Heart right ventricle (tissue), 16 donors: ENCODE measurements at regions of chr9 and their contacts with region 1.

Region 1: DNA sequence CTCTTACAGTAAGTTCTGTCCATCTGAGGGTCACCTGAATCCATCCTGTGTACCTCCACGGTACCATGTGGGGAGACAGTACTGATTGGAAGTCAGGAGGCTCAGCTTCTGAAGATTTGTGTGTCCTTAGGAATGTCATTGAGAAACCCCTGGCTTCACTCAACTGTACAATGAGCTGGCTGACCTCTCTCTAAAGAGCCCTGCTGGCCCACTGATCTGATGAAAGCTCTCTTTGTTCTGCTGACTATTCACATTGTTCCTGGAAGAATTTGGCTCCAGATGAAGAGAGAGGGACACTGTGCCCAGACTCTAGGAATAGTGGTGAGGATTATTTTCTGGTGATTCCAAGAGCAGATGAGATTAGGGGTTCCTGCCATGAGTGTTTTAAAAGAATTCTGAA is 141.2 kb downstream of the LURAP1L start:
- DNase-seq: no peak
- ATAC-seq: peak in 4 of 8 donors; percentile 26 to 64 (median 54)
- H3K4me3 ChIP-seq: no peak overlapping the region
- H3K27ac ChIP-seq: no peak overlapping the region
- H3K4me1 ChIP-seq: no peaks in the 10 kb centered on the region
- H3K27me3 ChIP-seq: no peaks in the 10 kb centered on the region
- CTCF ChIP-seq: no peak

Region 2: GRCh38 chr9:12719431-12719830 is 196.6 kb before region 1 on chr9:
- intact Hi-C with region 1: no loop called
- DNase-seq: no peak
- ATAC-seq: peak in 3 of 8 donors; percentile 59 to 69 (median 65)
- H3K4me3 ChIP-seq: no peak overlapping the region
- H3K27ac ChIP-seq: no peak overlapping the region
- H3K4me1 ChIP-seq: no peaks in the 10 kb centered on the region
- H3K27me3 ChIP-seq: no peaks in the 10 kb centered on the region
- CTCF ChIP-seq: peak in 8 of 9 donors; percentile 31 to 68 (median 55)

Region 3: DNA sequence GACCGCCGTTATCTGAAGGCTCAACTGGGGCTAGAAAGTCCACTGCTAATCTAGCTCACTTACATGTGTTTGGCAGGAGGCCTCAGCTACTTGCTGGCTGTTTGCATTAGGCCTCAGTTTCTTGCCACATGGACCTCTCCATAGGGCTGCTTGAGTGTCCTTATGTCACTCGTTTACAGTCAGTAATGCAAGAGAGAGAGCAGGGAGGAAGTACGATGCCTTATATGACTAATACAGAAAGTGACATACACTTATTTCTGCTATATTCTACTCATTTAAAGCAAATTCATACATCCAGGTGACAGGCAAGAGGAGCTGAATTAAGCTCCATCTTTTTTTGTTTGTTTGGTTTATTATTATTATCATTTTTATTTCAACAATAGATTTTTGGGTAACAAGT is 38.4 kb after region 1 on chr9:
- intact Hi-C with region 1: no loop called
- DNase-seq: no peak
- ATAC-seq: no peak
- H3K4me3 ChIP-seq: no peak overlapping the region
- H3K27ac ChIP-seq: no peak overlapping the region
- H3K4me1 ChIP-seq: no peaks in the 10 kb centered on the region
- H3K27me3 ChIP-seq: no peaks in the 10 kb centered on the region
- CTCF ChIP-seq: no peak

Region 4: DNA sequence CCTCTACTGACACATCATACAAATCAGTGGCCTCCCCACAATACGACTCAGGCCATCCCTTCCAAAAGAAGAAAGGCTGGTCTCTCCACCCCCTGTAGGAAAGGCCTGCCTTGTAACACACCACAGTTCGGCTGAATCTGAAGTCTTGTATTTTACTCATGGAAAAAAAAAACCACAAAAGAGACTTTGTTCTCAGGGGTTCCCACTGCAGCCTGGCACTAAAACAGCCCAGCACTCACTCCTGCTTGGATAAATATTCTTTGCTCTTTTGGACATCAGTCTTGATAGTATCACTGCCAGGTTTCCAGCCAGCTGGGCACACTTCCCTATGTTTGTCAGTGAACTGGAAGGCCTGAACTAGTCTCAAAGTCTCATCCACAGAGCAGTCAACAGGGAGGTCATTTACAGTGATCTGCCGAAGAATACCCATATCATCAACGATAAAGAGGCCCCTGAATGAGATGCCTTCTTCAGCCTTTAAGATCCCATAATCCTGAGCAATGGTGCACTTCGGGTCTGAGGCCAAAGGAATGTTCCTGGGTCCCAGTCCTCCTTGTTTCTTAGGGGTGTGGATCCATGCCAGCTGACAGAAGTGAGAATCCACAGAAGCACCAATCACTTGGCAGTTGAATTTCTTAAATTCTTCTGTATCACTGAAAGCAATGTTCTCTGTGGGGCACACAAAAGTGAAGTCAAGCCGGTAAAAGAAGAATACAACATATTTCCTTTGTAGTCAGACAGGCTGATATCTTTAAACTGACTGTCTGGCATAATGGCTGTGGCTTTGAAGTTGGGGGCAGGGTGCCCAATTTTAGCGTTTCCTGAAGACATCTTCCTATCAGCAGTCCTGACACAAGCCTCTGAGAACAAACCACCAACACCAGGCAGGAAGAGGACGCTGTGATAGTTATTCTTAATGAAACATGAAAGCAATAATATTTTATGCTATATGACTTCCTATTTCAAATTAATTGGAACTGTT is 56.9 kb after region 1 on chr9:
- intact Hi-C with region 1: loop called in 1 of 10 experiments (anchors 10 kb)
- DNase-seq: peak in 1 of 2 donors; percentile 13
- ATAC-seq: peak in 7 of 8 donors; percentile 55 to 87 (median 81)
- H3K4me3 ChIP-seq: no peak overlapping the region
- H3K27ac ChIP-seq: peak overlapping the region in 7 of 10 donors; percentile 17 to 61 (median 39)
- H3K4me1 ChIP-seq: peaks cover 0 to 17% (median 8%) of the 10 kb centered on the region in 9 donors
- H3K27me3 ChIP-seq: no peaks in the 10 kb centered on the region
- CTCF ChIP-seq: no peak